ENCODE measurements at regions of chr13 and their contacts with region 1.

Region 1: GRCh38 chr13:59677966-59678814 is 485.5 kb downstream of the DIAPH3 start:
- DNase-seq: peak in 5 of 9 donors; percentile 21 to 34 (median 22)
- ATAC-seq: peak; percentile 67
- H3K4me3 ChIP-seq: no peak overlapping the region
- H3K4me3 Mint-ChIP-seq: no peak overlapping the region
- H3K27ac ChIP-seq: no peak overlapping the region
- H3K27ac Mint-ChIP-seq: peak overlapping the region in 1 of 9 donors; percentile 48
- H3K4me1 ChIP-seq: no peaks in the 10 kb centered on the region
- H3K4me1 Mint-ChIP-seq: peaks cover 0 to 5% (median under 1%) of the 10 kb centered on the region in 7 donors
- H3K27me3 ChIP-seq: no peaks in the 10 kb centered on the region
- H3K27me3 Mint-ChIP-seq: no peaks in the 10 kb centered on the region

Region 2: GRCh38 chr13:58619396-58620113 is 1058.6 kb before region 1 on chr13:
- CTCF ChIA-PET with region 1: no interaction called
- POLR2A ChIA-PET with region 1: no interaction called
- intact Hi-C with region 1: no loop called
- DNase-seq: no peak
- ATAC-seq: no peak
- H3K4me3 ChIP-seq: no peak overlapping the region
- H3K4me3 Mint-ChIP-seq: no peak overlapping the region
- H3K27ac ChIP-seq: no peak overlapping the region
- H3K27ac Mint-ChIP-seq: no peak overlapping the region
- H3K4me1 ChIP-seq: no peaks in the 10 kb centered on the region
- H3K4me1 Mint-ChIP-seq: no peaks in the 10 kb centered on the region
- H3K27me3 ChIP-seq: no peaks in the 10 kb centered on the region
- H3K27me3 Mint-ChIP-seq: no peaks in the 10 kb centered on the region

Region 3: DNA sequence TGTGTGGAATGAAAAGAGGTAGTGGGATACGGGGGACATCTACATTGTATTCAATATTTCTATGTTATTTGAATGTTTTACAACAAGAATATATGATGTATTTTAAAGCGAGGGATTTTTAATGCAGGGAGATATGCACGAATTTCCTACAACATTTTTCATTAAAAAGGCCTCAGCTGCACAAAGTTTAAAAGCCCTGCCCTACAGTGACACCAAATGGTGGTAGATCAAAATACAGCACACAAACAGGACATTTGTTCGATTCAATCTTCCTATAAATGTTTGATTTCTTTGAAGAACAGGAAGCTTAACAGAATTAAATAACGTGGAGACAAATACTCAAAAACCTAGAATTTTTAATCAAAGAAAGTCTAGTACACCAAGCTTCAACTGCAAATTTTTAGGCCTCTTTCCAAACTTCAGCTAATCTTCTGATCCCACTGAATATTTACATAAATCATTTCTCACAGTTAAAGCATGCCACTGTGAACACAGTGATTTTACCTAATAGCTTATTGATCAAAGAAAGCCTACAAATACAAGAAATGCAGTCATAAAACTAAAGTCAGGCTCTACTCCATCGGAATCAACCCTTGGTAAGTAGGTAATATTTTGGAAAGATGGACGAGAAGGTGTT is 228.3 kb after region 1 on chr13:
- CTCF ChIA-PET with region 1: no interaction called
- POLR2A ChIA-PET with region 1: no interaction called
- intact Hi-C with region 1: loop called in 1 of 2 experiments (anchors 1 kb)
- DNase-seq: peak in 2 of 9 donors; percentile 2 to 3
- ATAC-seq: no peak
- H3K4me3 ChIP-seq: no peak overlapping the region
- H3K4me3 Mint-ChIP-seq: no peak overlapping the region
- H3K27ac ChIP-seq: no peak overlapping the region
- H3K27ac Mint-ChIP-seq: no peak overlapping the region
- H3K4me1 ChIP-seq: no peaks in the 10 kb centered on the region
- H3K4me1 Mint-ChIP-seq: peaks cover 0 to 2% (median 0%) of the 10 kb centered on the region in 7 donors
- H3K27me3 ChIP-seq: no peaks in the 10 kb centered on the region
- H3K27me3 Mint-ChIP-seq: no peaks in the 10 kb centered on the region

Region 4: GRCh38 chr13:60163478-60164233 is 485.5 kb after region 1 on chr13 and contains the start of gene DIAPH3:
- CTCF ChIA-PET with region 1: no interaction called
- POLR2A ChIA-PET with region 1: no interaction called
- intact Hi-C with region 1: loop called in 1 of 2 experiments (anchors 10 kb)
- DNase-seq: peak; percentile 84 to 93 (median 90)
- ATAC-seq: peak; percentile 100
- H3K4me3 ChIP-seq: peak within 1 kb of the TSS; percentile 92
- H3K4me3 Mint-ChIP-seq: peak within 1 kb of the TSS; percentile 92 to 98 (median 96)
- H3K27ac ChIP-seq: peak within 1 kb of the TSS; percentile 78
- H3K27ac Mint-ChIP-seq: peak within 1 kb of the TSS; percentile 84 to 96 (median 95)
- H3K4me1 ChIP-seq: no peaks in the 10 kb centered on the region
- H3K4me1 Mint-ChIP-seq: peaks cover 17 to 36% (median 29%) of the 10 kb centered on the region in 7 donors
- H3K27me3 ChIP-seq: no peaks in the 10 kb centered on the region
- H3K27me3 Mint-ChIP-seq: peaks cover 0 to 16% (median 5%) of the 10 kb centered on the region in 5 donors
- total RNA-seq, gene DIAPH3: 0.37 to 17.5 TPM in 2 of 5 experiments, not detected in the others

Region 5: DNA sequence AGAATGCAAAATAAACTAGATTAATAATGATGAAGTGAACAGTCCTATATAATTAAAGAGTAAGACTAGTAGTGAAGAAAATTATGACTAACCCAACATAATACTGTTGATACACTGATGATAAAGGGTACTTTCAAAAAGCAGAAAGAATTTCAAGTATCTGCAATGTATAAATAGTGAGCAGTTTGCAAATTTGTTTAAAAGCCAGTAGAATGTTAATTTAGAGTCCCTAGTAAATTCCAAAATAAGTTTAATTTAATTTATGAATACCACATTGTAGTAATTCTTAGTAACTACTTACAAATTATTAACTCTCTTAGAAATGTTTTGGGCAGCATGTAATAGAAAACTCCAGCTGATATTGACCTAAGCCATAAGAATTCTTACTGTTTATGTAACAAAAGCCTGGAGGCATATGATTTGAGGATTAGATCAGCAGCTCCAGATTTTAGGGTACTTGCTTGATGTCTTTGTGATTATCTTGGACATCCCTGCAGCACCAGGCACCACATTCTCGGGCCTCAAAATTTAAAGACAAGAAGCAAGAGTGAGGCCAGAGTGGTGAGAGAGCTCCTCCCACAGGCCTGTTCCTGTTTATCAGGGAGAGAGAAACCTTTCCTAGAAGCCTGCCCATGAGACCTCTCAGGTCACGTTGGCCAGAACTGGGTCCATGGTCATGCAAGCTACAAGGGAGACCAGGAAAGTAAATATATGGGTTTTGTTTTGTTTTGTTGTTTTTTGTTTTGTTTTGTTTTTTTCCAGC is 651.2 kb after region 1 on chr13:
- CTCF ChIA-PET with region 1: no interaction called
- POLR2A ChIA-PET with region 1: no interaction called
- intact Hi-C with region 1: loop called (anchors 1 to 2 kb)
- DNase-seq: peak in 1 of 9 donors; percentile 8
- ATAC-seq: no peak
- H3K4me3 ChIP-seq: no peak overlapping the region
- H3K4me3 Mint-ChIP-seq: no peak overlapping the region
- H3K27ac ChIP-seq: no peak overlapping the region
- H3K27ac Mint-ChIP-seq: peak overlapping the region in 1 of 9 donors; percentile 5
- H3K4me1 ChIP-seq: no peaks in the 10 kb centered on the region
- H3K4me1 Mint-ChIP-seq: peaks cover 0 to 5% (median 0%) of the 10 kb centered on the region in 7 donors
- H3K27me3 ChIP-seq: no peaks in the 10 kb centered on the region
- H3K27me3 Mint-ChIP-seq: peaks cover 0 to 21% (median 0%) of the 10 kb centered on the region in 5 donors

Region 6: GRCh38 chr13:60335531-60335930 is 657.3 kb after region 1 on chr13:
- CTCF ChIA-PET with region 1: no interaction called
- POLR2A ChIA-PET with region 1: no interaction called
- intact Hi-C with region 1: loop called (anchors 1 to 2 kb)
- DNase-seq: peak in 3 of 9 donors; percentile 3 to 8 (median 4)
- ATAC-seq: no peak
- H3K4me3 ChIP-seq: no peak overlapping the region
- H3K4me3 Mint-ChIP-seq: no peak overlapping the region
- H3K27ac ChIP-seq: no peak overlapping the region
- H3K27ac Mint-ChIP-seq: no peak overlapping the region
- H3K4me1 ChIP-seq: no peaks in the 10 kb centered on the region
- H3K4me1 Mint-ChIP-seq: no peaks in the 10 kb centered on the region
- H3K27me3 ChIP-seq: no peaks in the 10 kb centered on the region
- H3K27me3 Mint-ChIP-seq: peaks cover 6 to 16% (median 11%) of the 10 kb centered on the region in 5 donors

Region 7: DNA sequence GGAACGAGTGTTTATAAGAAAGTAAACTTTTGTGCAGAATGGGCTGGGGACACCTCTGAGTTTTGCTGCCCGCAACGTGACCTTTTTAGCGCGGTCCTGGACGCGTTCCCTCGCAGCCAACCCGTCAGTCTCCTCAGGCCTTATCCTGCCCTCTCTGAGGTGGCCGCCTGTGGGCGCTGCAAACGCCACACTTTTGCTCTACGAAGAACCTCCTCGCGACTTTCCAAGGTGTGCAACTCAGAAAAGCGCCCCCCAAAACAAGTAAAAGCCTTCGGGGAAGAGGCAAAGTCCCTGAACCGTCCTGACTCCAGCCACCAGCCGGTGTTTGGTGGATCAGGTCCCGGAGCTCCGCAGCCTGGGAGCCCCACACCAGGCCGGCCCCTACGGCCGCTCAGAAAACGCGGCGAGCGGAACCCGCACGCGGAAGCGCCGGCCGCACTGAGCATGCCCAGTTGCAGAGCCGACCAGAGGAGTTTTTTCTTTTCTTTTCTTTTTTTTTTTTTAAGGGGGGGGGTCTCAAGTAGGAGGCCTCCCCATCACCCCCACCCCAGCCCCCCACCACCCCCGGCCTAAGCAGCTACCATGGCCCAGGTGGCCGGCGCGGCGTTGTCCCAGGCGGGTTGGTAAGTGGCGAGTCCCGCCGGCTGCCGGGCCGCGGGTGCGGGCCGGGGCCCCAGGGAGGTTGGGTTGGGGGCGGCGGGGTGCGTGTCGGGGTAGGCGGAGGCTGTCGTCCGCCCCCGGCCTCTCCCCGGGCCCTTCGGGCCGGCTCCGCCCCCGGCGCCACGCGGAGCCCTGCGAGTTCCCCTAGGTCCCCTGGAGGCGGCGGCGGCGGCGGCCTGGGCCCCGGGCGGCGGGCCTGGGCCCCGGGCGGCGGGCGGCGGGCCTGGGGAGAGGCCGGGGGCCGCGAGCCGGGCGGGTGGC is 718.9 kb after region 1 on chr13 and contains the start of gene TDRD3:
- CTCF ChIA-PET with region 1: no interaction called
- POLR2A ChIA-PET with region 1: no interaction called
- intact Hi-C with region 1: loop called in 1 of 2 experiments (anchors 1 kb)
- DNase-seq: peak; percentile 71 to 86 (median 82)
- ATAC-seq: peak; percentile 82
- H3K4me3 ChIP-seq: peak within 1 kb of the TSS; percentile 85
- H3K4me3 Mint-ChIP-seq: peak within 1 kb of the TSS; percentile 88 to 98 (median 95)
- H3K27ac ChIP-seq: peak within 1 kb of the TSS; percentile 80
- H3K27ac Mint-ChIP-seq: peak within 1 kb of the TSS; percentile 91 to 99 (median 96)
- H3K4me1 ChIP-seq: peaks cover 15 to 20% of the 10 kb centered on the region in 2 donors
- H3K4me1 Mint-ChIP-seq: peaks cover 25 to 54% (median 44%) of the 10 kb centered on the region in 7 donors
- H3K27me3 ChIP-seq: no peaks in the 10 kb centered on the region
- H3K27me3 Mint-ChIP-seq: no peaks in the 10 kb centered on the region
- total RNA-seq, gene TDRD3: 24.7 to 33.6 (median 27.2) TPM

Measured in naive thymus-derived CD4-positive, alpha-beta T cell (primary cell).